T-cell (primary cell): ENCODE measurements at regions of chr16 and their contacts with region 1.

Region 1: GRCh38 chr16:73692861-73693260 is 603.8 kb upstream of the PSMD7 start:
- DNase-seq: no peak
- ATAC-seq: no peak
- H3K4me3 ChIP-seq: no peak overlapping the region
- H3K4me3 Mint-ChIP-seq: no peak overlapping the region
- H3K27ac ChIP-seq: no peak overlapping the region
- H3K27ac Mint-ChIP-seq: no peak overlapping the region
- H3K4me1 ChIP-seq: no peaks in the 10 kb centered on the region
- H3K4me1 Mint-ChIP-seq: no peaks in the 10 kb centered on the region
- H3K27me3 ChIP-seq: no peaks in the 10 kb centered on the region
- H3K27me3 Mint-ChIP-seq: peaks cover 0 to 3% of the 10 kb centered on the region in 2 donors

Region 2: GRCh38 chr16:73572135-73572828 is 120.6 kb before region 1 on chr16:
- CTCF ChIA-PET with region 1: no interaction called
- POLR2A ChIA-PET with region 1: interaction called in 1 of 2 experiments, 10 read pairs
- DNase-seq: no peak
- ATAC-seq: no peak
- H3K4me3 ChIP-seq: no peak overlapping the region
- H3K4me3 Mint-ChIP-seq: no peak overlapping the region
- H3K27ac ChIP-seq: no peak overlapping the region
- H3K27ac Mint-ChIP-seq: no peak overlapping the region
- H3K4me1 ChIP-seq: no peaks in the 10 kb centered on the region
- H3K4me1 Mint-ChIP-seq: no peaks in the 10 kb centered on the region
- H3K27me3 ChIP-seq: no peaks in the 10 kb centered on the region
- H3K27me3 Mint-ChIP-seq: peaks cover 2 to 8% of the 10 kb centered on the region in 2 donors